ENCODE measurements at regions of chr1 and their contacts with region 1.

Region 1: GRCh38 chr1:207751790-207752455 is at the start of gene CD46:
- DNase-seq: peak; percentile 87
- ATAC-seq: peak; percentile 96
- H3K4me3 ChIP-seq: peak within 1 kb of the TSS; percentile 93 to 97
- H3K27ac ChIP-seq: peak within 1 kb of the TSS; percentile 70
- H3K4me1 ChIP-seq: peaks cover 26 to 36% of the 10 kb centered on the region in 2 experiments
- H3K27me3 ChIP-seq: no peaks in the 10 kb centered on the region
- CTCF ChIP-seq: no peak
- POLR2A ChIP-seq: peak; percentile 74
- RAD21 ChIP-seq: no peak
- total RNA-seq, gene CD46: 100 TPM

Region 2: DNA sequence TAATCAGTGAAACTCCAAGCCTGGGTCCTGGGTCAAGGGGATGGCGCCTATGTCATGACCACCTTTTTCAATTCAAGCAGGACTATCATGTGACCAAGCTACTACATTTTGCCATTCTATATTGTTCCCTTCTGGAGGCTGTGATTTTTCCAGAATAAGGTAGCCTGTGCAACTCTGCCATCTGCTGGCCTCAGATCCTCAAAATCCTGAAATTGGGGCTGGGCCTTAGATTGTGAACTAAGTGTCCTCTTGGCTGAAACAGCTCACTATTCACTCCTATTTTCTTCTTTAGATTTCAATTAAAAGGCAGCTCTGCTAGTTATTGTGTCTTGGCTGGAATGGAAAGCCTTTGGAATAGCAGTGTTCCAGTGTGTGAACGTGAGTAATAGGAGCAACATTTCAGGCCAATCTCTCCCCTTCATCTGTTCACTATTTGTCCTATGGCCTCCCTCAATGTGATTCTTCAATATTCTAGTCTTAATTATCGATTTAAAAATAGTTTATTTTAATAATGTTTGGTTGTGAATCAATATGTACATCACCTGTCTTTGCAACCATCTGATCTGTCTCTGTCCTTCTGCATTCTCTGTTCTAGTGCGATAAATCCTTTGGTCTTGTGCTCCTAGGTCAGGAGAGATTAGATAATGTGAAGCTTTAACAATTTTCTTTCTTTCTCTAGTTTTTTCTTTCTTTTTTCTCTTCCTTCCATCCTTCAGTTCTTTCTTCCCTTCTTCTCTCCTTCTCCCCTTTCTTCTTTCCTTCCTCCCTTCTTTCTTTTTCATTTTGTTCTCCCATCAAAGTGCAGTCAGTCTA is 186.2 kb before region 1 on chr1:
- CTCF ChIA-PET with region 1: no interaction called
- POLR2A ChIA-PET with region 1: no interaction called
- RAD21 ChIA-PET with region 1: no interaction called
- intact Hi-C with region 1: no loop called
- DNase-seq: peak; percentile 34
- ATAC-seq: peak; percentile 98
- H3K4me3 ChIP-seq: no peak overlapping the region
- H3K27ac ChIP-seq: no peak overlapping the region
- H3K4me1 ChIP-seq: no peaks in the 10 kb centered on the region
- H3K27me3 ChIP-seq: no peaks in the 10 kb centered on the region
- CTCF ChIP-seq: peak; percentile 43 to 48 (median 45); a peak in 5 of 6 replicates
- POLR2A ChIP-seq: no peak
- RAD21 ChIP-seq: peak; percentile 65

Region 3: GRCh38 chr1:207711285-207711684 is 40.6 kb before region 1 on chr1:
- CTCF ChIA-PET with region 1: no interaction called
- POLR2A ChIA-PET with region 1: no interaction called
- RAD21 ChIA-PET with region 1: no interaction called
- intact Hi-C with region 1: loop called (anchors 2 kb)
- DNase-seq: peak; percentile 59
- ATAC-seq: peak; percentile 84
- H3K4me3 ChIP-seq: no peak overlapping the region
- H3K27ac ChIP-seq: no peak overlapping the region
- H3K4me1 ChIP-seq: peaks cover 6 to 19% of the 10 kb centered on the region in 2 experiments; a peak in 3 of 4 replicates
- H3K27me3 ChIP-seq: no peaks in the 10 kb centered on the region
- CTCF ChIP-seq: peak in 2 of 3 experiments; percentile 21 to 22; a peak in 2 of 6 replicates
- POLR2A ChIP-seq: no peak
- RAD21 ChIP-seq: peak; percentile 48

Measured in HCT116 (cell line).